ENCODE measurements at regions of chr4 and their contacts with region 1.

Region 1: DNA sequence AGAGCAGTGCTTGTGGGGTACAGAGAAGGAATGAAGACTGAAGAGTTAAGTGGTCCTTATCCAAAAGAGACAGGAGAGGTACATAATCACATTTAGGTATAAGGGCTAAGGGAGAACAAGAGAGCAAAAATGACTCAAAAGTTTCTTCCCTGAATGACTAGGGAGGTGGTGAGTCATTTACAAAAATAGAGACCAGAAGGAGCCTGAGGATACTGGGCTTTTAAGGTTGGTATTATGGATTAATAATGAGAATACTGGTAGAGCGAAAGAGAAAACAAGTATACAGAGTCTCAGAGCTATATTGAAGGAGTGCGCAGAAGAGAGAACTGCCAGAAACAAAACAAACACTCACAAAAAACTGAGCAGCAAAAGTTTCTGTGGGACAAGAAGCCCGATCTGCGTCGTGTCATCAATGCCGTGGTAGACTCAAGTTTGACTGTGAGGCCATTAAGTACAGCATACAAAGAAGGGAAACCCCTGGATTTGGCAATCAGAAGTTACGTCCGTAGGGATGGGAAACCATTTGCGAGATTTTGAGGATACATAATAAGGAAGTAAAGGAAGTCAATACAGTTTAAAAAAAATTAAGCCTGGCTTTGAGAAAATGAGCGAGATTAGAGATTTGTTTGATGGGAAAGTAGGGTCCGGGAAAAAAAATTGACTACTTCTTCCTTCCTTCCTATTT is 129.1 kb upstream of the STIM2 start:
- DNase-seq: peak; percentile 13
- ATAC-seq: peak; percentile 82
- H3K4me3 ChIP-seq: no peak overlapping the region
- H3K27ac ChIP-seq: no peak overlapping the region
- H3K4me1 ChIP-seq: no peaks in the 10 kb centered on the region; the same call in 1 of the 2 replicates
- H3K27me3 ChIP-seq: no peaks in the 10 kb centered on the region
- CTCF ChIP-seq: no peak
- EP300 ChIP-seq: no peak
- POLR2A ChIP-seq: no peak
- RAD21 ChIP-seq: no peak

Region 2: DNA sequence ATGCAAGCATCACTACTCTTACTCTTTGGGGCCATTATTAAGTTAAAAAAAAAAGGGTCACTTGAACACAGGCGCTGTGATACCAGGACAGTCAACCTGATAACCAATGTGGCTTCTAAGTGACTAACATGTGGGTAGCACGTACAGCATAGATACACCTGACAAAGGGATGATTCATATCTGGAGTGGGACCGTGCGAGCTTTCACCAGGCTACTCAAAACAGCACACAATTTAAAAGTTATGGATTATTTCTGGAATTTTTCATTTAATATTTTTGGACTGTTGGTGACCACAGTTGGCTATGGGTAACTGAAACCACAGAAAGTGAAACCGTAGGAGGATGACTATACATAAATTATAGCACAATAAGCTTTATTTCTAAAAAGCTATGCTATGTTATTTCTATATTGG is 15.3 kb after region 1 on chr4:
- CTCF ChIA-PET with region 1: interaction called, 4 read pairs
- POLR2A ChIA-PET with region 1: no interaction called
- RAD21 ChIA-PET with region 1: no interaction called
- SMC1A ChIA-PET with region 1: interaction called, 4 read pairs
- in situ Hi-C with region 1: no loop called
- intact Hi-C with region 1: loop called (anchors 2 kb)
- DNase-seq: peak; percentile 55
- ATAC-seq: peak; percentile 100
- H3K4me3 ChIP-seq: no peak overlapping the region
- H3K27ac ChIP-seq: no peak overlapping the region
- H3K4me1 ChIP-seq: peaks cover 16% of the 10 kb centered on the region
- H3K27me3 ChIP-seq: no peaks in the 10 kb centered on the region
- CTCF ChIP-seq: no peak
- EP300 ChIP-seq: peak; percentile 78 to 96
- POLR2A ChIP-seq: no peak
- RAD21 ChIP-seq: 0 out of 2 replicates have a peak, but pooled peaks have one; percentile 10